Psoas muscle (tissue), 8 donors: ENCODE measurements at regions of chr11 and their contacts with region 1.

Region 1: GRCh38 chr11:93570759-93571413 is 27.7 kb upstream of the SMCO4 start:
- DNase-seq: peak in 1 of 2 donors; percentile 25
- ATAC-seq: peak; percentile 76 to 91 (median 88)
- H3K4me3 ChIP-seq: no peak overlapping the region
- H3K27ac ChIP-seq: peak overlapping the region; percentile 65
- H3K4me1 ChIP-seq: peaks cover 38% of the 10 kb centered on the region
- H3K27me3 ChIP-seq: no peaks in the 10 kb centered on the region
- CTCF ChIP-seq: no peak

Region 2: DNA sequence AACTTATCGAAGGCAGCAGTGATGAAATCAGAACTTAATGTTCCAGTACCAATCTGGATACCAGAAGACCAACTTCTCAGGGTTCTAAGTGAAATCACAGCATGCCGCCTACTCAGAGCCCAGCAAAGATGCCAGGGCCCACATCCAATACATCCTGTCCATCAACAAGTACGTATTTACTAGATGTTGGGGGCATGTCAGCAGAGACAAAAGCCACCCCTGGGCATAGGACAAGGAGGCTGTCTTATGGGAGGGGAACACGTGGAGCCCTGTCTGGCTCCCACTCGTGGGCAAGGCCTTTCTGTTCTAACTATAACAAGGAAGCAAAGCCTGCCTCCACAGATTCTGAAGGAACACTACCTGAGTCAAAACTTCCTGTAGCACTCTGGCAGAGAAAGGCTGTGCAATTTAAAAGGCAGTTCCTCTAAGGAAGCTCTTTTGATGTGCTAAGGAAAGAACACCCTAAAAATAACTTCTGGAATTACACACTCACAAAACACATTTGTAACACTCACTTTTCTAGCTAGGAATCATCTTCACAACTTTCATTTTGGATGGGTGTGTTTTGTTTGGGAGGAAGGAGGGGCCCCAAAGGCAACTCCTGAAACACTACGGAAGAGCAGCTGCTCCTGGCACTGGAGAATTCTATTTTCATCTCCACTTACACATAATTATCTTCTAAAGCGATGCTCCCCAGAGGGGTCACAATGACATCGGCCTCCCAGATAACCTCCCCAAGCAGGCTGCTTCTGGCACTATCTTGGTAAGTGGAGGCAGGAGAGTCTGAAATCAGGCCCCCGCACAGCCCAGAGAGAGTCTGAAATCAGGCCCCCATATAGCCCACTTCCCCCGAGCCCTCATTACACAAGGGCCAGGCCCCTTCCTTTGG is 41.9 kb before region 1 on chr11:
- intact Hi-C with region 1: loop called in 1 of 2 experiments (anchors 1 kb)
- DNase-seq: no peak
- ATAC-seq: peak; percentile 27 to 61 (median 56)
- H3K4me3 ChIP-seq: no peak overlapping the region
- H3K27ac ChIP-seq: peak overlapping the region; percentile 74
- H3K4me1 ChIP-seq: peaks cover 64% of the 10 kb centered on the region
- H3K27me3 ChIP-seq: no peaks in the 10 kb centered on the region
- CTCF ChIP-seq: no peak